ENCODE measurements at regions of chr3 and their contacts with region 1.

Region 1: GRCh38 chr3:41198950-41199865 is at the start of gene CTNNB1:
- DNase-seq: peak; percentile 92
- H3K4me3 Mint-ChIP-seq: peak within 1 kb of the TSS; percentile 84
- H3K27ac Mint-ChIP-seq: peak within 1 kb of the TSS; percentile 93
- H3K4me1 Mint-ChIP-seq: peaks cover 28% of the 10 kb centered on the region
- H3K27me3 Mint-ChIP-seq: peaks cover 4% of the 10 kb centered on the region
- total RNA-seq, gene CTNNB1: 131 to 132 TPM

Region 2: GRCh38 chr3:39406368-39407258 is 1792.6 kb before region 1 on chr3 and contains the start of gene RPSA:
- CTCF ChIA-PET with region 1: no interaction called
- POLR2A ChIA-PET with region 1: no interaction called
- intact Hi-C with region 1: loop called (anchors 5 kb)
- DNase-seq: peak; percentile 98
- H3K4me3 Mint-ChIP-seq: peak within 1 kb of the TSS; percentile 95
- H3K27ac Mint-ChIP-seq: peak within 1 kb of the TSS; percentile 99
- H3K4me1 Mint-ChIP-seq: peaks cover 46% of the 10 kb centered on the region
- H3K27me3 Mint-ChIP-seq: peaks cover 2% of the 10 kb centered on the region
- total RNA-seq, gene RPSA: 2,627 to 2,738 TPM

Region 3: DNA sequence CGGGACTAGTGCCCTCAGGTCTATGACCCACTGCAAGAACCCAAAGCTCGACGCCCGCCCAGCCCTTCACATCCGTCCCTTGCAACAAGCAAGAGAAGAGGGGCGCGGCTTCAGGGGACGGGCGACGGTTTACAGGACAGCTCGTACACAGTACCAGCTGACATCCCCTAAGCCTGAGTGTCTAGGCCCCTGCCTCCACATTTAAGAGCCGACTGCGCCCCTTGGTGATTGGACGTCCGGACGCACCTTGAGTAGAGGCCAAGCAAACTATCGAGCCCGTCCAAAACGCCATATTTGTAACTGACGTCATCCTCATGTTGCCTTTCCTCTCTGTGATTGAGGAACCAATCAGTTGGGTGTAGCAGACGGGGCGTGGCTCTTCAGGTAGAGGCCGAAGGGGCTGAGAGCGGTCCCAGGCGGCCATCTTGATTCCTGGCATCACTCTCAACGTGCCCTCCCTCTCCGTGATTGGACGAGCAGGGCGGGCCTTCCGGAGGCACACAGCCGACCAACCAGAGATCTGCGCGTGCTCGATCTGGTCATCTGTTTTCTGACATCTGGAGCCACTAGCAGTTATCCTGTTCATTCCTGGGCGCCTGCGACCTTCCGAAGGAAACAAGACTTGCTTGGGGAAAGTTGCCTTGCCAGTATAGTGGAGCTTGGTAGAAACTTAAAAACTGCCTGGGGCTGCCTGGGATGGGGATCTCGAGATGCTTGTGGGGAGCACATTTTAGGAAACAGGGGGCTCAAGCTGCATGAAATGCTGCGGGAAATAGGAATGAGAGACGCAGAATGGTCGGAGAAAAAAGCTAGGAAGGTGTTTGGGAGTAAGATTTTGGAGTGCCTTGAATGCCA is 746.1 kb before region 1 on chr3:
- CTCF ChIA-PET with region 1: no interaction called
- POLR2A ChIA-PET with region 1: interaction called, 3 read pairs
- intact Hi-C with region 1: loop called (anchors 10 kb)
- DNase-seq: peak; percentile 98
- H3K4me3 Mint-ChIP-seq: peak overlapping the region; percentile 93
- H3K27ac Mint-ChIP-seq: peak overlapping the region; percentile 96
- H3K4me1 Mint-ChIP-seq: peaks cover 32% of the 10 kb centered on the region
- H3K27me3 Mint-ChIP-seq: peaks cover 1% of the 10 kb centered on the region

Region 4: DNA sequence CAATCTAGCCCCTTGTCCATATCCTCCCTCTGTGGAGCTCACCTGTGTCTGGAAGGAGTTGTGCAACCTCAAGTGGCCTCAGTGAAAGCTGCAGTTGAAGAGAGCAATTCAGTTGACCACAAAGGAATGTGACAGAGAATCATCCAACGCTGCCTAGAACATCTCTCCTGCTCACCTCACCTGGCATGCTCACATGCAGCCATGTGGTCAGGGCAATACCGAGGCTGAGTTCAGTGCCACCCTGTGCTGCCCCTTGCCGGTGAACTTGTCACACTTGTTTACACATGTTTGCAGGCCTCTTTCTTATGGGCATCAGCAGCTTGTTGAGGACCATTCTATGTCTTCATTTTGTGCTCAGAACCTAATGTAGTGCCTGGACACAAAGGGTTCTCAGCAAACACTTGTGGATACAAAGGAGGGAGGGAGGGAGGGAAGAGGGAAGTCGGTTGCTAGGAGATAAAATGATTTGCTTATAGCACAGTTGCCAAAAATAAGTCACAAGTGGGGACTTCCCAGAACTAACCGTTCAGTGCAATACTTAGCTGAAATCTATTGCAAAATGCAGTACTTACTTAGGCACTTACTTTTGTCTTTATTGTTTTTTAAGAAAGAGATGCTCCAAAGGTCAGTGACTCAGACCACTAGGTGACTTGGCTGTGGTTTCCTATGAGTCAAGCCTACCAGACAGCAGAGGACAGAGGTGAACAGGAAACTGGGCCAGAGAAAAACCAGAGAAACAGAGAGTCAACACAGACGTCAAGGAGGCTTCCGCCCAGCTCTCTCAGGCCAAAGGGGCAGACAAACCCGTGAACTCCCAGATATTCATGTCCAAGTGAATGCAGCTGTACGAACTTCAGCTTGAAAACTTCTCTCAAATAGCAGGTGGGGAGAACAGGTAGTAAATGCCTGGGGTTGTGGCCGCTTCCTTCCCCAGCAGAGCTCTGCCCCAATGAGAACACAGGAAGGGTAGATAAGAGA is 227.7 kb before region 1 on chr3:
- CTCF ChIA-PET with region 1: no interaction called
- POLR2A ChIA-PET with region 1: interaction called, 6 read pairs
- intact Hi-C with region 1: loop called (anchors 1 kb)
- DNase-seq: peak; percentile 64
- H3K4me3 Mint-ChIP-seq: no peak overlapping the region
- H3K27ac Mint-ChIP-seq: peak overlapping the region; percentile 73
- H3K4me1 Mint-ChIP-seq: peaks cover 18% of the 10 kb centered on the region
- H3K27me3 Mint-ChIP-seq: peaks cover 29% of the 10 kb centered on the region

Region 5: GRCh38 chr3:41213588-41213987 is 14.4 kb after region 1 on chr3:
- CTCF ChIA-PET with region 1: interaction called, 6 read pairs
- POLR2A ChIA-PET with region 1: interaction called, 10 read pairs
- intact Hi-C with region 1: no loop called
- DNase-seq: no peak
- H3K4me3 Mint-ChIP-seq: no peak overlapping the region
- H3K27ac Mint-ChIP-seq: no peak overlapping the region
- H3K4me1 Mint-ChIP-seq: peaks cover 77% of the 10 kb centered on the region
- H3K27me3 Mint-ChIP-seq: no peaks in the 10 kb centered on the region

Region 6: GRCh38 chr3:41961750-41962679 is 762.8 kb after region 1 on chr3 and contains the start of gene ULK4:
- CTCF ChIA-PET with region 1: no interaction called
- POLR2A ChIA-PET with region 1: interaction called, 4 read pairs
- intact Hi-C with region 1: loop called (anchors 5 kb)
- DNase-seq: peak; percentile 98
- H3K4me3 Mint-ChIP-seq: peak within 1 kb of the TSS; percentile 90
- H3K27ac Mint-ChIP-seq: peak within 1 kb of the TSS; percentile 80
- H3K4me1 Mint-ChIP-seq: peaks cover 17% of the 10 kb centered on the region
- H3K27me3 Mint-ChIP-seq: peaks cover under 1% of the 10 kb centered on the region
- total RNA-seq, gene ULK4: 9.5 to 10.8 TPM

Region 7: GRCh38 chr3:42080452-42080891 is 881.3 kb after region 1 on chr3:
- CTCF ChIA-PET with region 1: interaction called, 3 read pairs
- POLR2A ChIA-PET with region 1: no interaction called
- intact Hi-C with region 1: loop called (anchors 10 kb)
- DNase-seq: peak; percentile 51
- H3K4me3 Mint-ChIP-seq: no peak overlapping the region
- H3K27ac Mint-ChIP-seq: peak overlapping the region; percentile 80
- H3K4me1 Mint-ChIP-seq: peaks cover 59% of the 10 kb centered on the region
- H3K27me3 Mint-ChIP-seq: no peaks in the 10 kb centered on the region